SK-N-SH (cell line): ENCODE measurements at regions of chr4 and their contacts with region 1.

Region 1: DNA sequence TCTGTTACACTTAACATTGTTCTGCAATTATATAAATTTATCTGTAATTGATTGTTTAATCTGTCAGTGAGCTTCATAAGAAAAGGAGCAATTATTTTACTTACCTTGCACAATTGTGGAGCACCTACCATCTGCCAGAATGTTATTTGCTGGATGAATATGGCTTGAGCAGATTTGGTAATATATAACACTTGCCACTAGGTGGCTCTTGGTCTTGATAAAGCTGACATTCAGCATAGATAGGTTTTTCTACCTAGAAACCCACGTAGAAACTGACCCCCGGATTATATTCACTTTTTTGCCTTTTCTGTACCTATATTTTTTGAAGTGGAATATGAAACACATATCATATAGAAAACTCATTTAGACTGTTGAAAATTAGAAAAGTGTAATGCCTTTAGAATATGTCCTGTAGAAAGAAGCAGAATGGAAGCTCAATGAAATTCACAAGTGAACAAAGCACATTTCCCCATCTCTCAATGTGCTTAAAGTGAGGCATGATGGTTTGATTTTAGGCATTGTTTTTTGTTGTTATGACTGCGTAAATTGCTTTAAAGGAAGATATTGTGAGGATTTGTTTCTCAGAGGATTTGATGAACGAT is 9.5 kb downstream of the RBPJ start:
- DNase-seq: peak; percentile 51
- H3K4me3 ChIP-seq: no peak overlapping the region
- H3K27ac ChIP-seq: no peak overlapping the region
- H3K4me1 ChIP-seq: no peaks in the 10 kb centered on the region; a peak in 2 of 4 replicates
- H3K27me3 ChIP-seq: no peaks in the 10 kb centered on the region
- CTCF ChIP-seq: peak; percentile 81
- EP300 ChIP-seq: no peak
- RAD21 ChIP-seq: peak; percentile 78

Region 2: GRCh38 chr4:25925486-25926201 is 404.6 kb before region 1 on chr4:
- CTCF ChIA-PET with region 1: interaction called, 13 read pairs
- POLR2A ChIA-PET with region 1: no interaction called
- DNase-seq: peak; percentile 64
- H3K4me3 ChIP-seq: no peak overlapping the region
- H3K27ac ChIP-seq: no peak overlapping the region
- H3K4me1 ChIP-seq: no peaks in the 10 kb centered on the region; a peak in 3 of 4 replicates
- H3K27me3 ChIP-seq: no peaks in the 10 kb centered on the region
- CTCF ChIP-seq: peak; percentile 52
- EP300 ChIP-seq: no peak
- RAD21 ChIP-seq: peak; percentile 72

Region 3: DNA sequence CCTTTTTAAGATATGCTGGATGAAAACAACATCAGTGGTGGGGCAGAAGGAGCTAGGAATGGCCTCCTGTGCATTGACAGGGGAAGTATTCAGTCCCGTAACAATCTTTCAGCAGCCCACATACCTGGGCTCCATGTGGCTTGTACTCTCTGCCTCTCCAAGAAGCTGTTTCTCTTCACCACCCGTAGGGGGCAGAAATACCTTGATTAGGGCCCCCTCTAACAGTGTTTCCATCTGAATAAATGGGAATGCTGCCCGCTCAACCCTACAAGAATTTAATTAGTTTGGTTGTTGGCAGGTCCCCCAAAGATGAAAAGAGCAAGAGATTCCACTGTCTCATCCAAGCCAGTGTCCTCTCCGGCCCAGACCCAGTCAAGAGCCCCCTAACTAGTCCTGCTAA is 261.1 kb before region 1 on chr4:
- CTCF ChIA-PET with region 1: interaction called, 12 read pairs
- POLR2A ChIA-PET with region 1: no interaction called
- DNase-seq: peak; percentile 62
- H3K4me3 ChIP-seq: no peak overlapping the region; a peak in 1 of 4 replicates
- H3K27ac ChIP-seq: no peak overlapping the region
- H3K4me1 ChIP-seq: peaks cover 0 to 6% of the 10 kb centered on the region in 2 experiments; a peak in 1 of 4 replicates
- H3K27me3 ChIP-seq: peaks cover 6% of the 10 kb centered on the region; the same call in 1 of the 2 replicates
- CTCF ChIP-seq: peak; percentile 48
- EP300 ChIP-seq: no peak
- RAD21 ChIP-seq: peak; percentile 62

Region 4: DNA sequence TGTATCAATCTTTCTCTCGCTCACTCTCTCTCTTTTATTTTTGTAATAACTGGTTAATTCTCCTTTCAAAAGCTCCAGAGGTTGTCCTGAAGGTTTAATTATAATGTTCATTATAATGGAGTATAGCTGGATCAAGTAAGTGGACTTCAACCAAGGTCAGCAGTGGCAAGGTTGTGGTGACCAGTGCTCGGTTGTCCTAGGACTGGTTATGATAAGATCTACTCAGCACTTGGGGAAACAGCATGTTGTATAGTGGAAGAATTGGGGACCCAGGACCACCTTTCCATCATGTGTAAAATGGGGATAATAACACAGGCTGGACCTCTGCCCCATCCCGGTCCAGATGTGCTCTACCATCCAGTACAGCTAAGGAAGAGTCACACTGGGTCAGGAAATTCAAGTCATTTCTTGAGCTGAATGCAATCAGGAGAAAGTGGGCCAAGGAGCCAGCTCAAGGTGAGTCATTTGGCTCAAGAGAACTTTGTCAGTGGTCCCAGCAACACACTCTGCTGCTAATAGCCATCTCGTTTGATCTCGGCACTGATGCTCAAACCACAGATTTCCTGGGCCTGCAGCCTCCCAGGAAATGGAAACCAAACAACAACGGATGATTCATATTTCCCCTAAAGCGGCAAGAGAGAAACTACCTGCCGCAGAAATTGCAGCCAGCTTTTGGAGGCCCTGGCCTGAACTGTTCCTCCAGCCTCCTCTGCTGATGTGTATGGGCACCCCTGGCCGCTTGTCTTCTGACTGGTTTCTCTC is 133.1 kb before region 1 on chr4:
- CTCF ChIA-PET with region 1: no interaction called
- POLR2A ChIA-PET with region 1: no interaction called
- DNase-seq: no peak
- H3K4me3 ChIP-seq: no peak overlapping the region
- H3K27ac ChIP-seq: peak overlapping the region; percentile 21 to 32; a peak in 2 of 4 replicates
- H3K4me1 ChIP-seq: peaks cover 4 to 8% of the 10 kb centered on the region in 2 experiments; a peak in 2 of 4 replicates
- H3K27me3 ChIP-seq: no peaks in the 10 kb centered on the region; the same call in 1 of the 2 replicates
- CTCF ChIP-seq: no peak
- EP300 ChIP-seq: peak; percentile 47 to 99; a peak in 3 of 4 replicates
- RAD21 ChIP-seq: no peak

Region 5: GRCh38 chr4:26351685-26352084 is 21.4 kb after region 1 on chr4:
- CTCF ChIA-PET with region 1: interaction called, 65 read pairs
- POLR2A ChIA-PET with region 1: interaction called, 3 read pairs
- DNase-seq: no peak
- H3K4me3 ChIP-seq: no peak overlapping the region
- H3K27ac ChIP-seq: no peak overlapping the region
- H3K4me1 ChIP-seq: peaks cover 0 to 3% of the 10 kb centered on the region in 2 experiments; a peak in 1 of 4 replicates
- H3K27me3 ChIP-seq: no peaks in the 10 kb centered on the region
- CTCF ChIP-seq: no peak
- EP300 ChIP-seq: no peak
- RAD21 ChIP-seq: no peak

Region 6: DNA sequence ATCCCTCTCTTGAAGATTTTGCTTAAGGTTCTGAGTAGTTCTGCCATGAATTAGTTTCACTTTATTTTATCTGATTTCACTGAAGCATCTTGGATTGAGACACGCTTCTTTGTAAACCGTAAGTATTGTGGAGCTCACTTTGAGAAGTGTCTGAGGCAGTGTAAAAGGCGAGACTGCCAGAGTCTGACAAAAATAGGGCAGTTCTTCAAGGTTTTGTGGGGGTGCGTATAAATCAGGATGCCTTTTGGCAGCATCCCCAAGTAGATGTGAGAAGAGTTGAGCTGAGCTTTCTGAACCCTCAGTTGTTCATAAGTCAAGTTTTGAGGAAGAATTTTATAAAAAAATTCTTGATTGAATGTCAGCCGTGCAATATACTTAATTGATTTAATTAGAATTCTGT is 66.8 kb after region 1 on chr4:
- CTCF ChIA-PET with region 1: interaction called, 30 read pairs
- POLR2A ChIA-PET with region 1: no interaction called
- DNase-seq: no peak
- H3K4me3 ChIP-seq: no peak overlapping the region
- H3K27ac ChIP-seq: no peak overlapping the region
- H3K4me1 ChIP-seq: no peaks in the 10 kb centered on the region
- H3K27me3 ChIP-seq: no peaks in the 10 kb centered on the region
- CTCF ChIP-seq: no peak
- EP300 ChIP-seq: no peak
- RAD21 ChIP-seq: no peak

Region 7: DNA sequence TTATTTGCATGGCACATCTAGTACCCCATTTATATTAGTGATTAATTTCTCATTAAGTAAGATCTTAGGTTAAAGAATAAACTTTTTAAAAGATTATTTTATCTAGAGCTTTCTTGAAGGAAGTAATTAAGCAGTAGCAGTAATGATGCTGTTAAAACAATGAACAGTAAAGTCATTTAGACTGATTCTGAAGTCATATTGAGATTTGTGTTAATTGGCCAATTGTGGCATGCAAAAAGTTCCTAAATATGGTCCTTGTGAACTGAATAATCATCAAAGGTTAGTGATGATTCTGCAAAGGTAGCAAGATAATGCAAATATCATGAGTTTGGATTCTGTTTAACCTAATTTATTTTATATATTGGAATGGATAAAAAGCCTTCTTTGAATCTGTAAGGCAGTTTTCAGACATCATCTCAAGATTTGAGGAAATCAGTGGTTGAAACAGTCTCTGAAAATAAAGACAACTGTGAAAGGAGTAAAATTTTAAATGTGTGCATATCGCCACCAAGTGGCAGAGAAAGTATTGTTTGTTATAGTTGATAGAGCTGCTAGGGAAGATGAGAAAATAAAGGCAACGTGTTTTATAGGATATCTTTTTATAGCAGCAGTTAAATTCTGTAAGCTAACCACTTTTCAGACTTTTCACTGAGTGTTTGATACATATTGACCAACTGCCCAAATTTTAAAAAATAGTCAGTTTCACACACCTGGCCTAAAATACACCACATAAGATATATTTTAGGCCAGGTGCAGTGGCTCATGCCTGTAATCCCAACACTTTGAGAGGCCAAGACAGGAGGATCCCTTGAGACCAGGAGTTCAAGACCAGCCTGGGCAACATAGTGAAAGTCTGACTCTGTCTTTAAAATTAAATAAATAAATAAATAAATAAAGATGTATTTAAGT is 80.4 kb after region 1 on chr4:
- CTCF ChIA-PET with region 1: interaction called, 201 read pairs
- POLR2A ChIA-PET with region 1: no interaction called
- DNase-seq: peak; percentile 40
- H3K4me3 ChIP-seq: no peak overlapping the region
- H3K27ac ChIP-seq: no peak overlapping the region
- H3K4me1 ChIP-seq: no peaks in the 10 kb centered on the region
- H3K27me3 ChIP-seq: no peaks in the 10 kb centered on the region
- CTCF ChIP-seq: peak; percentile 80
- EP300 ChIP-seq: no peak
- RAD21 ChIP-seq: peak; percentile 86